ENCODE measurements at regions of chr7 and their contacts with region 1.

Region 1: DNA sequence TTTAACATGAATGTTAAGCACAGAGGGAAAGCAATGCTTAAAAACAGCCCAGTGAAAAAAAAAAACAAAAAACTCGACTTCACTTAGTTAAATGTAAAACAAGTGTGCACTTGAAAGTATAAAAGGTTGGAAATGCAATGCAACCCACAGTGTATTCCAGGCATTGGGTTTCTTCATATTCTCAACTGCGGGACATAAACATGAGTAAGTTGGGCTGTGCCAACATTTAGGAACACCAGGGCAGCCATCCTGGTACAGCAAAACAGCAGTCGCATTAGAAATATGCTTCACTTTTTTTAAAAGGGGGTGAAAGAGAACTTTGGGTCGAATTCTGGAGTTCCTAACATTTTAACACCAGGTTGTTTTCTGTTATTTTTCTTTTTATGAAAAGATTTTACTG is 937 bp downstream of the STEAP1 start:
- DNase-seq: no peak

Region 2: DNA sequence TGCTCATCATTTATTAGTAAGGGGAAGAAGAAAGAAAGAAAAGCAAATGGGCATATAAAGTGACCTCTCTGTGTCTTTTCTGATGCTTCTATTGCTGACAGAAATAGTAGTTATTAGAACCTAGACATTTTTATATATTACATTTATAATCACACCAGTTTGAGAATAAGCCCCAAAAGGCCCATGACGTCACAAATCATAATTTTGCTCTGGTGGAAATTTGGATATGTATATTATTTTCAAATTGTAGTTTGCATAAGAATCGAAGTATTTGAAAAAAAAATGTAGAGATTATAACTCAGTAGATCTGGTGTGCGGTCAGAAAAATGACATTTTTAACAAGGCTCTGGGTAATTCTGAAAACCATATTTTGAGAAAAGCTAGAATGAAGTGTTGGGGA is 102.1 kb before region 1 on chr7:
- intact Hi-C with region 1: no loop called
- DNase-seq: no peak

Region 3: GRCh38 chr7:90070227-90070626 is 85.0 kb before region 1 on chr7:
- intact Hi-C with region 1: no loop called
- DNase-seq: no peak

Region 4: GRCh38 chr7:90262438-90262837 is 107.2 kb after region 1 on chr7:
- intact Hi-C with region 1: loop called (anchors 2 kb)
- DNase-seq: no peak

Region 5: DNA sequence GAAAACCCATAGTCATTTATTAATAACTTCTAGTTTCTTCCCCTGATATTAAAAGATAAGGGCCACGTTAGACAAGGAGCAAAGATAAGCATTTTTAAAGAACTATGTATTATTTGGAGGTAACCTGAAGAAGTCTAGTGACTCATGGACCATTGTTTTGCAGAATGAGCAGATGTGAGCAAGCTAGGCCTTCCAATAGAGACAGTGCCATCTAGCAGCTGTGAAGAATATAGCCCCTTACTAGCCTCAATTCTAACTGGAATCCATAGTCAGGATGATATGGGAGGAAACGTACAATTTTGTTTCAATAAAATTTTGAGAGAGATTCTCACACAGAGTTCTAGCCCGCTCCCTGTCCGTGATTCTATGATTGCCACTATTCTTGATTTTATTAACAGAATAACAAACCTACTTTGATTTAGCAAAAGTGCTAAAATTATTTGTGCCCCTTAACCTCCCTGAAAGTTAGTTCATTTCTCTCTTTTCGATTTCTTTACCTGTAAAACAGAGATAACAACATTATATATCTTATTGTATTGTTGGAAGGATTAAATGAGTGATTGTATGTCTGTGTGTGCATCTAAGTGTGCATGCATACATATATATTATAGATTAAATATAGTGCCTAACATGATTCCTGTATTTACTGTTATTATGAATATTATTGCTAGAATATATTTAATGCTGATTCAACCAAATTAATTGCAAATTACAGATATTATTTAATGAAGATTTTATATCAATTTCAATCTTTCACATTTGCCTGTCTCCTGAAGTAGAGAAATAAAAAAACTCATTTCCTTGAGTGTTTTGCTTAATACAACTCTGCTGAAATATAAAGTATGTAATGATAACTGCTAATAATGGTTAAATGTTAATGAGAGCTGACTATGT is 143.2 kb after region 1 on chr7:
- intact Hi-C with region 1: loop called (anchors 10 kb)
- DNase-seq: no peak

Region 6: GRCh38 chr7:90424720-90425119 is 269.5 kb after region 1 on chr7:
- intact Hi-C with region 1: loop called (anchors 2 kb)
- DNase-seq: no peak

Measured in cardiac septum (tissue), 1 donor.